ENCODE measurements at regions of chr20 and their contacts with region 1.

Region 1: DNA sequence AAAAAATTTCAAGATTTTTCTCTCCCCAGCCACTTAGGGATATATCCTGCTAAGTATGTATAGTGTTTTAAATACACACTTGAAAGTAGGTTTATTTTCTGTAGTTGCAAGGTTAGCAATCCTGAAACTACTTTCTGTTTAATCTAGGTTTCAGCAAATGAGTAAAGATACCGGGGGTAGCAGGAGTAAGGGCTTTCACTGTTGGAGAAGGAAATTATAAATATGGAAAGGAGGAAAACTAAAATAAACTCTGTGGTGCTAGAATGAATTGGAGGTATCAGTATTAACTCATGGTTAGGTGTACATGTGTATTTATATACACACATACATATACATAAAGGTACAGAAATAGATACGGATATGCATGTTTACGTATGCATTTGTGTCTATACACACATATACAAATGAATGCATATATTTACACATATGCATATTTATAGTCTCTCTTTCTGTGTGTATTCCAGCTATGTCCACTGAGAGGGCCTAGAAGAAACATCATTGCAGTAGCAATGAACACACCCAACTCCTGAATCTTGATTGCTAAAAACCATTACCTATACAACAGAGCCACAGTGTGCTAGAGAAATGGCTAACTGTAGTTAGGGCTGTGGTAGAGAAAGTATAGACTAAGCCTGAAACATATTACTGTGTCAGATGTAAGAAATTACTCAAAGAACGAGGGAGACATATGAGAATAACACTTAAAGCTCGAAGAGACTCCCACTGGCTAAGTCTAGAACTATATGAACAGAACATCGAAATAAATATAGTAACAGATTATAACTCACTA is 95.9 kb upstream of the EMILIN3 start:
- DNase-seq: no peak
- H3K4me3 Mint-ChIP-seq: no peak overlapping the region
- H3K27ac Mint-ChIP-seq: peak overlapping the region; percentile 1
- H3K4me1 Mint-ChIP-seq: peaks cover 14% of the 10 kb centered on the region
- H3K27me3 Mint-ChIP-seq: no peaks in the 10 kb centered on the region

Region 2: DNA sequence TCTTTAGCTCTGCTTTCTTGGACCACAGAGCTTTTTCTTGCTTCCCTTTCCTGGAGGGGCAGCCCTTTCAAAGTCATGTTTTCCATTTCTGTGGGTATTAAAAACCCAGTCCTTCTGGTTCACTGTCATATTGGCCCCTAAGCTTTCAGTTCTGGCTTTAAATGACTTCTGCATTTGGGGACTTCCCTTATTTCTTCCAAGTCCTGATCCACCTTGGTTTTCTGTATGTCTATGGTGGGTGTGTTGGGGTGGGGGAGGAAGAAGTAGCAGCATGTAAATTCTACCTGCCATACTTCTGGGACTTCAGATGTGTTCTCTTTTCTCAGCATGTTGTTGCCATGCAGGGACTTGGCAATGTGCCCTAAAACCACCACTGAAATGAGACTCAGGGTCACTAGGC is 18.9 kb before region 1 on chr20:
- intact Hi-C with region 1: loop called (anchors 1 kb)
- DNase-seq: no peak
- H3K4me3 Mint-ChIP-seq: no peak overlapping the region
- H3K27ac Mint-ChIP-seq: peak overlapping the region; percentile 53
- H3K4me1 Mint-ChIP-seq: peaks cover 17% of the 10 kb centered on the region
- H3K27me3 Mint-ChIP-seq: no peaks in the 10 kb centered on the region

Region 3: GRCh38 chr20:41617931-41618806 is 155.6 kb after region 1 on chr20 and contains the start of gene CHD6:
- intact Hi-C with region 1: no loop called
- DNase-seq: peak; percentile 99
- H3K4me3 Mint-ChIP-seq: peak within 1 kb of the TSS; percentile 89
- H3K27ac Mint-ChIP-seq: peak within 1 kb of the TSS; percentile 80
- H3K4me1 Mint-ChIP-seq: peaks cover 35% of the 10 kb centered on the region
- H3K27me3 Mint-ChIP-seq: peaks cover 15% of the 10 kb centered on the region
- total RNA-seq, gene CHD6: 32.5 and 32.7 TPM in 2 replicates

Region 4: GRCh38 chr20:41697861-41698419 is 235.4 kb after region 1 on chr20:
- intact Hi-C with region 1: no loop called
- DNase-seq: no peak
- H3K4me3 Mint-ChIP-seq: no peak overlapping the region
- H3K27ac Mint-ChIP-seq: no peak overlapping the region
- H3K4me1 Mint-ChIP-seq: peaks cover 13% of the 10 kb centered on the region
- H3K27me3 Mint-ChIP-seq: peaks cover 5% of the 10 kb centered on the region

Measured in activated T-helper 2 cell treated with anti-CD3 and anti-CD28 coated beads, Interferon-gamma antibody, Interleukin-2, Interleukin-4, amounts not matched to agents 10 μg/mL and 5 μg/mL and 100 μg/mL, durations not matched to agents 14 hours and 24 hours and 36 hours (primary cell).